Activated CD4-positive, alpha-beta memory T cell treated with anti-CD3 and anti-CD28 coated beads, Interleukin-2, amount 10 ng/mL, durations not matched to agents 7 days and 5 days (primary cell): ENCODE measurements at regions of chr2 and their contacts with region 1.

Region 1: GRCh38 chr2:224369028-224369632 is 32.8 kb downstream of the FAM124B start:
- DNase-seq: no peak
- H3K4me3 Mint-ChIP-seq: no peak overlapping the region
- H3K27ac Mint-ChIP-seq: no peak overlapping the region
- H3K4me1 Mint-ChIP-seq: no peaks in the 10 kb centered on the region
- H3K27me3 Mint-ChIP-seq: peaks cover 6% of the 10 kb centered on the region

Region 2: GRCh38 chr2:224325941-224326340 is 43.2 kb before region 1 on chr2:
- CTCF ChIA-PET with region 1: no interaction called
- POLR2A ChIA-PET with region 1: no interaction called
- DNase-seq: no peak
- H3K4me3 Mint-ChIP-seq: no peak overlapping the region
- H3K27ac Mint-ChIP-seq: no peak overlapping the region
- H3K4me1 Mint-ChIP-seq: no peaks in the 10 kb centered on the region
- H3K27me3 Mint-ChIP-seq: peaks cover 30% of the 10 kb centered on the region

Region 3: GRCh38 chr2:224357098-224357901 is 11.8 kb before region 1 on chr2:
- CTCF ChIA-PET with region 1: interaction called, 13 read pairs
- POLR2A ChIA-PET with region 1: no interaction called
- DNase-seq: peak; percentile 54
- H3K4me3 Mint-ChIP-seq: no peak overlapping the region
- H3K27ac Mint-ChIP-seq: no peak overlapping the region
- H3K4me1 Mint-ChIP-seq: no peaks in the 10 kb centered on the region
- H3K27me3 Mint-ChIP-seq: peaks cover 3% of the 10 kb centered on the region

Region 4: GRCh38 chr2:224392545-224392944 is 23.4 kb after region 1 on chr2:
- CTCF ChIA-PET with region 1: interaction called, 11 read pairs
- POLR2A ChIA-PET with region 1: no interaction called
- DNase-seq: no peak
- H3K4me3 Mint-ChIP-seq: no peak overlapping the region
- H3K27ac Mint-ChIP-seq: no peak overlapping the region
- H3K4me1 Mint-ChIP-seq: no peaks in the 10 kb centered on the region
- H3K27me3 Mint-ChIP-seq: peaks cover 2% of the 10 kb centered on the region

Region 5: DNA sequence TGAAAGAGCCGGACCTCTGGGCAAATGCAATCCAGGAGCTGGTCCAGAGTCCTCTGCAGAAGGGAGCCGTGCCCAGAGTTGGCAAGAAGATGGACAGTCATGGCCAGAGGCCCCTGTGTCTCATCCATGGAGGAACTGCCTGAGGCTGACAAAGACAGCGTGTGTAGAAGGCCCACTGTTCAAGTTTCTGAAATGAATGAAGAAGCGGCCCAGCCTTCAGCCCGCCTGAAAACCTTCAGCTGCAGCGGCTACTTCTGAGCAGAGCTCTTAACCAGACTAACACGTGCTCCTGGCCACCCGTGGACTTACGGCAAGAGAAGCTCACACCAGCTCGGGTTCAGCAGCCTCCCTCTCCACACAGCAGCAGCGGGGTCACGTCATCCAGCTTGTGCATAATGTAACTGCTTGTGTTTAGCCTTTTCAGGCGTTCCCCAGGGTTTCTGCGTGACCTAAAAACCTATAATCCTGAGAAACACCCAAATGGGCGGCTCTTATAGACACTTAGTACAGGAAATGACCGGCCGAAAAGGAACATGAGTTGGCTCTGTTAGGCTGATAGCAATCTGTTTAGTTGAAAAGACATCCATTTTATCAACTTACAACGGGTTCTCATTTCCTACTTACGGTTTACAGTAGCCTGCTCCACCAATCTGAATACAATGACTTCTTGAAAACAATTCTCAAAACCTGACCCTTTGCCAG is 32.7 kb after region 1 on chr2 and contains the start of gene FAM124B:
- CTCF ChIA-PET with region 1: interaction called, 11 read pairs
- POLR2A ChIA-PET with region 1: no interaction called
- DNase-seq: peak; percentile 56
- H3K4me3 Mint-ChIP-seq: peak within 1 kb of the TSS; percentile 65
- H3K27ac Mint-ChIP-seq: peak within 1 kb of the TSS; percentile 81
- H3K4me1 Mint-ChIP-seq: peaks cover 14% of the 10 kb centered on the region
- H3K27me3 Mint-ChIP-seq: no peaks in the 10 kb centered on the region
- total RNA-seq, gene FAM124B: 1.2 to 2.1 TPM